Tibial artery (tissue), 4 donors: ENCODE measurements at regions of chr4 and their contacts with region 1.

Region 1: DNA sequence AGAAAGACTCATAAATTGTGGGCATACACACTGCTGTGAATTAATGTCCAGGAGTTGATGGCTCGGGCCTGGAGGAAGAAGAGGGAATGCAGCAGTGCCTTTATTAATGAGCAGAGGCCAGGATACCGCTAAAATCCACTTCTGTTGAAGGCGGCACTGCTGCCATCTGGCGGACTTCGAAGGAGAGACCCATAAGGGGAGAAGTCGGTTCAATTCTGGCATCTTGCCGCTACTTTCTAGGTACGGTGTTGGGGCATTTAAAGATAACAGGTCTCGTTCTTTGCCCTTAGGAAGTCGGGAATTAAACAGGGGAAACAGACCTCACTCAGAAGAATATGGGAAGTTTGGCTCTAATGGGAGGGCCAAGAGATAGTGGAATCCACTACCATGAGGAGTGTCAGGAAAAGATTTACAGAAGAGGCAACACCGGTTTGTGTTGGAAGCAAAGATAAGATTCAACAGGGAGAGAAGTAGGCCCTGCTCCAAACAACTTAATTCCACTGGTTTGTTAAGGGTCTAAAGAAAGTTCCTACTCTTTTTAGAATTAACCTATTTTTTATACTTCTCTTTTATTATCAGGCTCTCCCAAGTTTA is 133.6 kb upstream of the GIMD1 start:
- DNase-seq: peak in 1 of 2 donors; percentile 28
- H3K4me3 ChIP-seq: no peak overlapping the region
- H3K27ac ChIP-seq: no peak overlapping the region
- H3K4me1 ChIP-seq: no peaks in the 10 kb centered on the region
- H3K27me3 ChIP-seq: no peaks in the 10 kb centered on the region
- CTCF ChIP-seq: peak; percentile 46 to 51

Region 2: GRCh38 chr4:106266201-106266600 is 236.0 kb before region 1 on chr4:
- intact Hi-C with region 1: loop called (anchors 10 kb)
- DNase-seq: no peak
- H3K4me3 ChIP-seq: no peak overlapping the region
- H3K27ac ChIP-seq: no peak overlapping the region
- H3K4me1 ChIP-seq: peaks cover 0 to 25% (median 4%) of the 10 kb centered on the region in 4 donors
- H3K27me3 ChIP-seq: no peaks in the 10 kb centered on the region
- CTCF ChIP-seq: peak; percentile 53 to 63

Region 3: DNA sequence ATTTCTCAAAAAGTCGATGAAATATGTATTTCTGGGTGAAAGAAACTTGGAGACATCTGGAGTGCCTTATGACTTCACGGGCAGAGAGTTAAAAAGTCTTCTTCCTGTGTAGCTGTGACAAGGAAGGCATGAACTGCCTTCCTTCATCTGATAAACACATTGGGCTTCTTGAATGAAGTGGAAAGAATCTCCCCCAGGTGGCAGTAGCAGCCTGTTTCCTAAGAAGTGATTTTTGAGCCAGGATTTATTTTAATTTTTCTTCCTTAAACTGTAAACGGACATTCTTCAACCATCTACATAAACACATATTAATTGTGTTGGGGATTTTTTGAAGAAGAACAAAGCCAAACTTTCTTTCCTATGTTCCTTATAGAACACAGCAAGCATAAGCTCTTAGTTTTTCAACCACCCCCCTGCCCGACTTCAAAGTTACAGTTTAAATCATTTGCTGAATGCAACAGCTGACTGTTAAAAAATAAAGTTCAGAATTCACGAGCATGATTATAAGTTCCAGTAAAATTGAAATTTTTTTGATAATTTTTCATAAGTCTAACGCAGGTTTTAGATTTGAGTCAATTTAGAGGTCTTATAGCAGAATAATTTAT is 132.6 kb before region 1 on chr4:
- intact Hi-C with region 1: loop called (anchors 5 kb)
- DNase-seq: no peak
- H3K4me3 ChIP-seq: no peak overlapping the region
- H3K27ac ChIP-seq: no peak overlapping the region
- H3K4me1 ChIP-seq: peaks cover 0 to 18% (median 3%) of the 10 kb centered on the region in 4 donors
- H3K27me3 ChIP-seq: no peaks in the 10 kb centered on the region
- CTCF ChIP-seq: peak; percentile 58 to 62

Region 4: DNA sequence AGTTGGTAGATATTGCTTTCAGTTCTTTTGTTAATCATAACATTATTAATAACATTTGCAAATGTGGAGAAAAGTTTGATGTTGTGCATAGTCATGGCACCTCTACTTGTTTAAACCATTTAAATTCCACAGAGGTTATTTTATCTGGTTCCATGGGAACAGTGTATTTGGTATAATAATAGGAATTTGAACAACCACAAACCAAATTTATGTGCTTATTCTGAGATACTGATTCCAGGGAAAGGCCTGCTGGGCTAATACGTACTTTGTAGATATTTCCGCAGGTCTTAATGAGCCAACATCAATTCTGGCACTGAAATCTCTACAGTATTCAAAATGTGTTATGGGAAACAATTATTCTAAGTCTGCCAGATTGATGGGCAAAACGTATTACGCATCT is 214.9 kb after region 1 on chr4:
- intact Hi-C with region 1: no loop called
- DNase-seq: no peak
- H3K4me3 ChIP-seq: no peak overlapping the region
- H3K27ac ChIP-seq: no peak overlapping the region
- H3K4me1 ChIP-seq: peaks cover 0 to 4% (median 0%) of the 10 kb centered on the region in 4 donors
- H3K27me3 ChIP-seq: no peaks in the 10 kb centered on the region
- CTCF ChIP-seq: no peak

Region 5: DNA sequence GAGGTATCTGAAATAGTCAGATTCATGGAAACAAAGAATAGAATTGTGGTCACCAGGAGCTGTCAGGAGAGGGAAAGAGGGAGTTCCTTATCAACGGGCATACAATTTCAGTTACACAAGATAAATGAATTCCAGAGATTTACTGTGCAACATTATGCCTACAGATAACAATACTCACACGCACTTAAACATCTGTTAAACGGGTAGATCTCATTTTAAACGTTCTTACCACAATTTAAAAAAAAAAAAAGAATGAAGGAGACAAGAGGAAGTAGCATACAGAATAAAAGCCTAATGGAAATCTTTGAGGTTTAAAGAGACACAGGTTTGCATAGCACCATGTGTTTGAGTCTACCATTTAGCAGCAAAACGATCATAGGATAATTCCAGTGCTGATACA is 235.9 kb after region 1 on chr4:
- intact Hi-C with region 1: no loop called
- DNase-seq: no peak
- H3K4me3 ChIP-seq: no peak overlapping the region
- H3K27ac ChIP-seq: no peak overlapping the region
- H3K4me1 ChIP-seq: no peaks in the 10 kb centered on the region
- H3K27me3 ChIP-seq: no peaks in the 10 kb centered on the region
- CTCF ChIP-seq: no peak